Adrenal gland (tissue), 19 donors: ENCODE measurements at regions of chr1 and their contacts with region 1.

Region 1: GRCh38 chr1:223081181-223081994 is 61.7 kb downstream of the TLR5 start:
- DNase-seq: peak; percentile 84 to 94 (median 88)
- H3K4me3 ChIP-seq: peak overlapping the region in 1 of 4 donors; percentile 51
- H3K27ac ChIP-seq: peak overlapping the region in 2 of 5 donors; percentile 40 to 47
- H3K4me1 ChIP-seq: no peaks in the 10 kb centered on the region
- H3K27me3 ChIP-seq: no peaks in the 10 kb centered on the region
- CTCF ChIP-seq: peak; percentile 92 to 99 (median 98)
- POLR2A ChIP-seq: no peak

Region 2: GRCh38 chr1:222792744-222793143 is 288.6 kb before region 1 on chr1:
- intact Hi-C with region 1: loop called (anchors 2 to 5 kb)
- DNase-seq: peak in 1 of 7 donors; percentile 18
- H3K4me3 ChIP-seq: no peak overlapping the region
- H3K27ac ChIP-seq: no peak overlapping the region
- H3K4me1 ChIP-seq: peaks cover 0 to 5% of the 10 kb centered on the region in 2 donors
- H3K27me3 ChIP-seq: no peaks in the 10 kb centered on the region
- CTCF ChIP-seq: peak in 5 of 6 experiments; percentile 46 to 79 (median 69)
- POLR2A ChIP-seq: no peak

Region 3: GRCh38 chr1:223811634-223812415 is 730.4 kb after region 1 on chr1:
- intact Hi-C with region 1: no loop called
- DNase-seq: no peak
- H3K4me3 ChIP-seq: no peak overlapping the region
- H3K27ac ChIP-seq: no peak overlapping the region
- H3K4me1 ChIP-seq: peaks cover 0 to 9% of the 10 kb centered on the region in 2 donors
- H3K27me3 ChIP-seq: no peaks in the 10 kb centered on the region
- CTCF ChIP-seq: peak; percentile 35 to 86 (median 65)
- POLR2A ChIP-seq: no peak